Head of caudate nucleus (tissue), 42 donors: ENCODE measurements at regions of chr18 and their contacts with region 1.

Region 1: GRCh38 chr18:74353169-74353775 is 37.6 kb downstream of the C18orf63 start:
- DNase-seq: peak; percentile 44 to 95 (median 85)

Region 2: GRCh38 chr18:74476140-74476539 is 122.9 kb after region 1 on chr18:
- intact Hi-C with region 1: loop called (anchors 5 kb)
- DNase-seq: peak in 41 of 42 donors; percentile 58 to 94 (median 80)

Region 3: DNA sequence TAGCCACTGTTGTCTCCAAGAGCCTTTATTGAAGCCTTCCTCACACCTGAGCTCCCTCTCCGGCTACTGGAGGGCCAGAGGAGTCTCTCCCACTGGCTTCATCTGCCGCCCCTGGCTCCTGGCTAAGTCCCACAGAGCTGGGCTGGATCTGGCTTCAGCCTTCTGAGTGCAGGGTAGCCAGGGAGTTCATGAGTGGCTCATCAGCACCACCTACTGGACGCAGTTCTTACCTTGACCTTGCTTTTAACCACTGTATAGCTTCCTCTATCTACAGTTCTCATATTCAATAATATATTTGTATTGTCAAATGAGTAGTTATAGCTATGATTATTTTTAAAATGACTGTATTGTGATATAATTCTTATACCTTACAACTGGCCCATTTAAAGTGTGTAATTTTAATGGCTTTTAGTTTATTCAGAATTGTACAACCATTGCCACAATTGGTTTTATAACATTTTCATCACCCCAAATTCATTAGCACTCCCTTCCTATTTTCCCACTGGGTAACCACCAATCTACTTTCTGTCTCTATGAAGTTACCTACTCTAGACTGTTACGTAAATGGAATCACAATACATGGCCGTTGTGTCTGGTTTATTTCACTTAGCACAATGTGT is 198.8 kb after region 1 on chr18:
- intact Hi-C with region 1: loop called (anchors 5 kb)
- DNase-seq: peak; percentile 65 to 97 (median 89)